K562 (cell line): ENCODE measurements at regions of chr13 and their contacts with region 1.

Region 1: DNA sequence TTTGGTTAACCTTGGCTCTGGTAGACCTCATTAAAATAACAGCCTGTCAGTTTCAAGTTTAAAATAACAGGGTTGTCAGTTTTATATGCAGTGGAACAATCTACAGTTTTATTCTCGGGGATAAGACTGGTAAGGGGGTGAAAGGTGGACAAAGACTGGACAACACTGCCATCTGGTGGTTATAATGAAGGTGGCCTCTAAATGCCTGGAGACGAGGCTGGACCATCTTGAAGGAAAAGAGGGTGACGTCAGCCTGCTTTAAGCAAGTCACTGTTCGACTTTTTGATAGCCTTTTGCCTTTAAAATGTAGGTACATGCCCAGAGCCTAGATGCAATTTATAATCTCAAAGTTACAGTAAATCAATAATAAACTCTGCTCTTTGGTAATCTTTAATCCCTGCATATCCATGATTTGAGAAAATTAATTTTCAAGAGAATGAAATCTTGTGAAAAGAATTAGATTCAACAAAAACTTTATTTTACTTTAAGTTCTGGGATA is 117.0 kb downstream of the DCT start:
- DNase-seq: peak; percentile 67 to 81 (median 74)
- ATAC-seq: peak; percentile 100
- H3K4me3 ChIP-seq: no peak overlapping the region
- H3K27ac ChIP-seq: no peak overlapping the region
- H3K4me1 ChIP-seq: no peaks in the 10 kb centered on the region
- H3K27me3 ChIP-seq: no peaks in the 10 kb centered on the region
- CTCF ChIP-seq: peak; percentile 47 to 80 (median 75); a peak in 5 of 6 replicates
- EP300 ChIP-seq: no peak
- POLR2A ChIP-seq: no peak
- RAD21 ChIP-seq: peak; percentile 67 to 82

Region 2: DNA sequence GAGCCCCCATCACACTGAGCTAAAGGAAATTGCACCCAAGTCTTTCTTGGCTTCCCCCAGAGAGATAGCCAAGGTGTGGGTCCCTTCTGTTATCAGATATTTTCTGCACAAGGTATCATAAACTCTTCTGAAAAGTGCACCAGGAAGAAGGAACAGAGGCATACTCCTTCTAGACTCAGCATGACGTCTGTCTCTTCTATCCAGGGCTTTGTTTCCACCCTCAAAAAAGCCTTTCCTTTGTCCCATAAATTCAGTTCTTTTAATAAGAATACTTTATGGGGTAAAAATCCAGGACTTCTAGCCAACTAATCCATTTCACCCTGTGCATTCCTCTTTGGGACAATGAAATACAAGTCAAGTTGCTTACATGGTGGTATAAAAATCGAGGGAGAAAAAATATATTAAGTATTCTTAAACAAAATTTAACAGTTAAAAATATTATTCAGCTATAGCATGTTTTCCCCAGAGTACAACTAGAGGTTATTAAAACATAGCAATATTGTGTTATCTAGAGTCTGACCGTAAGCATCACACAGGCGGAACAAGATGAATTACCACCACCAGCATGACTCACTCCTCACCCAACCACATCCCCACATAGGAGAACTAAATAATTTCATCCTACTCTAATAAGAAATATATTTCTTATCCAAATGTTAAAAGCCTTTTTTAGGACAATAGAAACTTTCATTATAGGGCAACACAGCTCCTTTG is 1215.7 kb before region 1 on chr13:
- CTCF ChIA-PET with region 1: no interaction called
- POLR2A ChIA-PET with region 1: no interaction called
- in situ Hi-C with region 1: no loop called
- intact Hi-C with region 1: no loop called
- DNase-seq: no peak
- ATAC-seq: no peak
- H3K4me3 ChIP-seq: no peak overlapping the region
- H3K27ac ChIP-seq: no peak overlapping the region
- H3K4me1 ChIP-seq: no peaks in the 10 kb centered on the region
- H3K27me3 ChIP-seq: no peaks in the 10 kb centered on the region
- CTCF ChIP-seq: no peak
- EP300 ChIP-seq: no peak
- POLR2A ChIP-seq: no peak
- RAD21 ChIP-seq: no peak

Region 3: DNA sequence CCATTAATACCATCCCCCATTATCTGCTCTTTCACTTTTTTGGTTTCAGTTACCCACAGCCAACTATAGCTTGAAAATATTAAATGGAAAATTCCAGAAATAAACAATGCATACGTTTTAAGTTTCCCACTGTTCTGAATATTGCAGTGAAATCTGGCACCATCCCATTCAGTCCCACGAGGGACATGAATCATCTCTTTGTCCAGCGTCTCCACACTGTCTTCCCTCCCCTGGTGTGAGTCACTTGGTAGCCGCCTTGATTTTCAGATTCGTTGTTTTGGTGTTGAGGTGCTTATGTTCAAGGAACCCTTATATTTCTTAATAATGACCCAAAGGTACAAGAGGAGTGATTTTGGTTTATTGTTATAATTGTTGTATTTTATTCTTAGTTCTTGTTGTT is 129.1 kb before region 1 on chr13:
- CTCF ChIA-PET with region 1: no interaction called
- POLR2A ChIA-PET with region 1: no interaction called
- in situ Hi-C with region 1: no loop called
- intact Hi-C with region 1: no loop called
- DNase-seq: no peak
- ATAC-seq: no peak
- H3K4me3 ChIP-seq: no peak overlapping the region
- H3K27ac ChIP-seq: no peak overlapping the region
- H3K4me1 ChIP-seq: no peaks in the 10 kb centered on the region
- H3K27me3 ChIP-seq: no peaks in the 10 kb centered on the region
- CTCF ChIP-seq: no peak
- EP300 ChIP-seq: no peak
- POLR2A ChIP-seq: no peak
- RAD21 ChIP-seq: no peak

Region 4: DNA sequence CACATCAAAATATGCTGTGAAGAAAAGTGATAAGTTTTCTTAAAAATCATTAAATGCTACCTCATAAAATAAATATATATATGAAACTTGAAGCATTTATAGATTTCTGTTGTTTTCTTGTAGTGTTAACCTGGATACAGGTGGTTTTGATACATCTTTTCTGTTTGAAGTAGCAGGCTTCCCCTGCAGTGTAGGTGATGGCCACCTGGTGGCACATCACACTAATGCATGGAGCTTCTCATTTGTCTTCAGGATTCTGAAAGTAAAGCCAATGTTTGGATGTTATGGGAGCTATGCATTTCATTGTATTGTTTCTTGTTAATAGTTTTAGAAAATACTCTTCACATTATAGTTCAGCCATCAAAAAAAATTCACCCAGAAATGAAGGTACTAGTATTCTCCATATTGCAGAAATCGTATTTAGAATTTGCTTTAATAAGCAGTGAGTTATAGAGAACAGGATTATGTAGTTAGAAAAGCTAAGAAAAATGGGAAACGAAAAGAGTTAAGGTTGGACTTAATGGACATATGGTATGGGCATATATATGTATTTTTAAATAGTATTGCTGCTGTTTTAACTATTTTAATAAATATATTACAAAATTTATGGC is 257.9 kb after region 1 on chr13:
- CTCF ChIA-PET with region 1: no interaction called
- POLR2A ChIA-PET with region 1: no interaction called
- in situ Hi-C with region 1: no loop called
- intact Hi-C with region 1: loop called (anchors 5 kb)
- DNase-seq: peak; percentile 30 to 68 (median 34)
- ATAC-seq: peak; percentile 87
- H3K4me3 ChIP-seq: no peak overlapping the region
- H3K27ac ChIP-seq: no peak overlapping the region
- H3K4me1 ChIP-seq: no peaks in the 10 kb centered on the region
- H3K27me3 ChIP-seq: no peaks in the 10 kb centered on the region
- CTCF ChIP-seq: peak; percentile 60 to 73 (median 64)
- EP300 ChIP-seq: no peak
- POLR2A ChIP-seq: no peak
- RAD21 ChIP-seq: peak; percentile 56 to 79